Cardiac septum (tissue), 1 donor: ENCODE measurements at regions of chr12 and their contacts with region 1.

Region 1: GRCh38 chr12:104201238-104202001 is 14.2 kb upstream of the TXNRD1 start:
- DNase-seq: no peak

Region 2: GRCh38 chr12:104877123-104877705 is 675.8 kb after region 1 on chr12:
- intact Hi-C with region 1: loop called (anchors 10 kb)
- DNase-seq: no peak

Region 3: GRCh38 chr12:105053116-105053572 is 851.7 kb after region 1 on chr12:
- intact Hi-C with region 1: loop called (anchors 5 kb)
- DNase-seq: no peak